Activated CD8-positive, alpha-beta T cell treated with anti-CD3 and anti-CD28 coated beads, Interleukin-2, amount 10 ng/mL, durations not matched to agents 7 days and 5 days (primary cell): ENCODE measurements at regions of chr1 and their contacts with region 1.

Region 1: DNA sequence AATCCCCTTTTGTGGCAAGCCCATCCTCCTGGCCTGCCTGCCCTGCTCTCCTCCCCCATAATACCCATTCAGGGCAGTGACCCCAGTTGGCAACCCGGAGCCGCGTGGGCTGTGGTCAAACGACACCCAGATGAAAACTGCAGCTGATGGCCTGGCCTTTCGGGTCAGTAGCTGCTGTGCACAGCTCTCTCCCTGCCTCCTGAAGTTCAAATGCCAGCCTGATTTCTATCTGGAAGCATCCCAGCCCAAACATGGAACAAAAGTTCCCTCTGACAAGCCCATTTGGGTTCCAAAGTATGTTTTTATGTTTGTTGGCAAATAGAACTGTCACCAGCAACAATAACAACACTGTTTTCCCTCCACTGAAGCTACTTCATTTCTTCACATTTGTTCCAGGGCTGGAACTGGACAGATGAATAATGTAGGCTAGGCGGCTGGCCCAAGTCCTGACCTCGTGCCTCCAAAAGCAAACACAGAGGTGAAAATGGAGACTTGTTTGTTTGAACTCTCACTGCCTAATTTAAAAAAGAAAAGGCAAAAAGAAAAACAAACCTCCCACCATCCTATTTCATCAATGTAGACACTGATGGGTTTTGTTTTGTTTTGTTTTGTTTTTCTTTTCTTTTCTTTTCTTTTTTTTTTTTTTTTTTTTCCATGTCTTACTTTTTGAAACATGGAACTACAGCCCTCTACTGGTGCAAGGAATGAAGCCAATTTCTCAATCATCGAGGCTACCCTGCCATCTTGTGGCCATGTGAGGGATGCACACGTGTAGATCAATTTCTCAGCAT is 179.0 kb downstream of the ADSS2 start:
- DNase-seq: peak; percentile 78
- ATAC-seq: peak; percentile 86
- H3K4me3 Mint-ChIP-seq: no peak overlapping the region
- H3K27ac Mint-ChIP-seq: no peak overlapping the region
- H3K4me1 Mint-ChIP-seq: peaks cover 4% of the 10 kb centered on the region
- H3K27me3 Mint-ChIP-seq: peaks cover 8% of the 10 kb centered on the region

Region 2: DNA sequence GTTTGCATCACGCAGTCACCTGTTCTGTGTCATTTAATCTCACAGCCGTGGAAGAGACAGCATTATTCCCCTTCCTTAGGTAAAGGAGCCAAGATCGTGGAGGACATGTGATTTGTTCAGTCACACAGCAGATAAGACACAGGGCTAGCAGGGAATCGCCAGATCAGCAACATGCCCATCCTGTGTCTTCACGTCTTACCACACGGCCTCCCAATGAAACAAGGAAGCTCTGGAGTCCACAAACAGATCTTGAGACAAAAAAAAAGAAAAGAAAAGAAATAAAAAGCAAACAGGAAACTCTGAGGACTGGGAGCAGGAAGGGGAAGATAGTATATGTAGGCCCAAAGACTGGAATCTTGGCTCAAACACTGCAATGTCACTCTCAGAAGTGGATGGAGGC is 23.8 kb after region 1 on chr1:
- CTCF ChIA-PET with region 1: interaction called, 24 read pairs
- POLR2A ChIA-PET with region 1: no interaction called
- DNase-seq: no peak
- ATAC-seq: no peak
- H3K4me3 Mint-ChIP-seq: no peak overlapping the region
- H3K27ac Mint-ChIP-seq: no peak overlapping the region
- H3K4me1 Mint-ChIP-seq: peaks cover 19% of the 10 kb centered on the region
- H3K27me3 Mint-ChIP-seq: no peaks in the 10 kb centered on the region